AG04449 (cell line): ENCODE measurements at regions of chr17 and their contacts with region 1.

Region 1: DNA sequence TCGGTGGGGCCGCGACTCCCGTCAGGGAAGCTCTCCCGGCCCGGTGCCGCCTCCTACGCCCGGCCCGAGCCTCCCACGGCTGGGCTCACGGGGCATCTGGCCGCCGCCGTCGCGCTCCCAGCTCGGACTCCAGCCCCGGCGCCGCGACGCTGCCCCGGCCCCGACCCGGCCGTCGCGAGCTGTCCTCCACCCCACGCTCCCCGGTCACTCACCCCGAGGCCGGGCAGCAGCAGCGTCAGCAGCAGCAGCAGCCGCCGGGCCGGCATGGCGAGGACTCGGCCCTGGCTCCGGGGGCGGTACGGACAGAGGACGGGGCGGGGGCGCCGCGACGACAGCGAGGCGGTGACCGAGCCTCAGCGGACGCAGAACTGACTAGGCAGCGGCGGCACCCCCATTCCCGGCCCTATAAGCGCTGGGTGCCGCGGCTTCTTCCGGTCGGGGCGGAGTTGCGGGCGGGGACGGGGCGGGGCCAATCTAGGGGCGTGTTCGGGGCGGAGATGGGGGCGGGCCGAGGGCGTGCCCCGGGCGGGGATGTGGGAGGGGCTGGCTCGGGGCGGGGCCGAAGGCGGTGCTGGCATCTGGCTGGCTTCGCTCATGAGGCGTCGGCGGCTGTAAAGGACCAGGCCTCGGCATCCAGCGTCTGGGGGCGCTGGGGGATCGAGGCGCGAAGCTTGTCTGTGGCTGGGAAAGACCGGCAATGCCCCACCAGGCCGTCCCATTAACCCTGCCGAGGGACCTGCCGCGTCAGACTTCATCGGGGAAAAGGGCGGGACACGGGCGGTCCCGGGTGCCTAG is at the start of gene ERN1:
- DNase-seq: peak; percentile 56
- H3K4me3 ChIP-seq: peak within 1 kb of the TSS; percentile 64
- CTCF ChIP-seq: no peak

Region 2: DNA sequence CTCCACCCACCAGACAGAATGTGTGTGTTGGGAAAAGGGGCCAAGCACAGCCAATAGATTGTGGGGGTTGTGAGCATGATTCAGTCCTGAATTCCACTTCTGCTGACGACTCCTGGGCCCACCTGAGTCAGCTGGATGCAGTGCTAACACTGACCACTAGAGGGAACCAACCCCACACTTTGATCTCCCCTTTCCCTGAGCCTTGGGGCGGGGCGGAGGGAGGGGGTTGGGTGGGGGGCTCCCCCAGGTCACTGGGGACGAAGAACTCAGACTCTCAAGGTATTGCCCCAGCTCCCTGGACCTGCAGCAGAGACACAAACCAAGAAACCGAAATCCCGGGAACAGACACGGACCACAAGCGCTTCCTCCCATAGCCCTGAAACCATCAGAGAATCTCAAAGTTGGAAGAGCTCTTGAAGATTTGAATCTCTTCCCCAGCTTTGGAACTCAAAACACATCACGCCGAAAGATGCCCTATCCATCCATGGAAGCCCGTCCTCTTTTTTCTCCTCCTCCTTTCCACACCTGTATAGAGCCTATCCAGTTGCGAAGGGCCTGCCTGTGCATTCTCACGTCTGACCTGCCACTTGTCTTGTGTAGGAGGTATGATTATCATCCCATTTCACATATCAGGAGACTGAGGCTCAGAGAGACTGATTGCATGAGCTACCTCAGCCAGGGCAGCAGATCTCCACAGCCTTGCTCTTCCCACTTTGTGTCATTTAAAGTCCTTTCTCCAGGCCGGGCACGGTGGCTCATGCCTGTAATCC is 218.1 kb before region 1 on chr17:
- CTCF ChIA-PET with region 1: interaction called, 111 read pairs
- POLR2A ChIA-PET with region 1: no interaction called
- DNase-seq: no peak
- H3K4me3 ChIP-seq: no peak overlapping the region
- CTCF ChIP-seq: peak; percentile 79

Region 3: DNA sequence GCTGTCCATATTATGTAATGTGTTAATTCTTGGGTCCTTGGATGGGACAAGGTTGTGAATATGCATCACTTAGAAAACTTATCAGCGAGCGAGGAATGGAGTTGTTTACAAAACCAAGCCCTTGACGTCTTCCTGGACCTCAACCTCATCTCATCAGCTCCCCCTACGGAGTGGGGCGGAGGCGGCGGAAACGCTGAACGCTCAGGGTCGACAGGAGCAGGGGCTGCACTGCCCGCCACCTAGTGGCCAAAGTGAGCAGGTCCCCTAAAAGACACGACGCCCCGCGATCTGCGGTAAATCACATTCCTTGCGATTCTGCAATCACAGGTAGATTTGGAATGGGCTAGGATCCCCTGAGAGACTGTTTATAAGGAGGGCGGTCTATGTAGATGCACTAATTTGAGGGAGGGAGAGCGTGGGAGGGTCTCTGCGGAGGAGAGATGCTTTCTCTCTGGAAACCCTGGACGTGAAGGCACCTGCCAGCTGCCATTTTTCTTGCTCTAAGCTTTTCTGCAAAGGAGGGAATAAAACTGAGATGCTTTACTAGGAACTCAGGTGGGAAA is 104.1 kb before region 1 on chr17:
- CTCF ChIA-PET with region 1: interaction called, 1,118 read pairs
- POLR2A ChIA-PET with region 1: interaction called, 11 read pairs
- DNase-seq: no peak
- H3K4me3 ChIP-seq: peak overlapping the region; percentile 20
- CTCF ChIP-seq: peak; percentile 90

Region 4: DNA sequence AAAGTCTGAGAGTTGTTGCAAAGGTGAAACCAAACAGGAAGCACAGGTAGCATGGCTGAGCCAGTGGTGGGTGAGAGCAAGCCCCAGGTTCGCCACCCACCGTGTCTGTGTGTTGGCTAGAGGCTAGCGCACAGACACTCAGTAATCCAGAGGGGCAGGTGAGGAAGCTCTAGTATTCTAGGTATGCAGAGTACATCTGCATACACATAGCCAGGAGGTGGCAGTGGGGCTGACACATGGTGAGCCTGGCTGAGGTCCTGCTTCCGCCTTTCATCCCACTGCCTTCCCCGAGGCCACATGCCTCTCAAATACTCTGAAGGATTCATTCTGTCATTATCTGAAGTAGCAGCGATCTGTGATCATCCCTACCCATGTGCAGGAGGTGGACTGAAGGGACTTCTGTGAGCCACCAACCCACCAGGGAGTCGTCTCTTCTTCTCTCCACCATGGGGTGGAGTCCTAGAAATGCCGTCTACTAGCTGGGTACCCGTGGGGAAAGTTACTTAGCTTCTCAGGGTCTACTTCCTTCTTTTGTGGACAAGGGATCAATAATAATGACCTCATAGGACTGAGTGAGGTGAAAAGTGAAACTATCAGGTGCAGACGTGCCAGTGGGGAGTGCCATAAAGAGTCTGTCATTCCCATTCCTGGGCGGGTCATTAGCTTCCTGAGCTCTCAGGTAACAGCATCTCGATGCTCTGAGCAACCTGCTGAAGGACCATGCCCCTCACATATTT is 73.5 kb before region 1 on chr17:
- CTCF ChIA-PET with region 1: interaction called, 83 read pairs
- POLR2A ChIA-PET with region 1: no interaction called
- DNase-seq: no peak
- H3K4me3 ChIP-seq: no peak overlapping the region
- CTCF ChIP-seq: no peak

Region 5: DNA sequence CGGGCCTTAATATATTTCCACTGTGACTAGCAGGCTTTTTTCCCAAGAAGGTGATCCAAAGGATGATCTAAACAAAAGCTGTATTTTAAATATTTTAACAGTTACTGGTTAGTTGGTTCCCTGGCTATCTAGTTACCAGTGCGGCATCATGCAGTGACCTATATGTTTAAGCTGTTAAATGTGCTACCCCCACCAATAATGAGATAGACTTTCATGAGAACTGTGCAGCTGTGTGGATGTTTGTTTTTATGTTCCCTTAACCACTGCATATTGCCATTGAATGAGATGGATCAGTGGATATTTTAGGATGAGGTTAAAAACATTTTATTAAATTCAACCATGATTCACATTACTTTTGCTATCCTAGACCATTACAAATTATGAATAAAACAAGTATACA is 17.0 kb before region 1 on chr17:
- CTCF ChIA-PET with region 1: interaction called, 37 read pairs
- POLR2A ChIA-PET with region 1: interaction called, 4 read pairs
- DNase-seq: no peak
- H3K4me3 ChIP-seq: no peak overlapping the region
- CTCF ChIP-seq: no peak

Region 6: DNA sequence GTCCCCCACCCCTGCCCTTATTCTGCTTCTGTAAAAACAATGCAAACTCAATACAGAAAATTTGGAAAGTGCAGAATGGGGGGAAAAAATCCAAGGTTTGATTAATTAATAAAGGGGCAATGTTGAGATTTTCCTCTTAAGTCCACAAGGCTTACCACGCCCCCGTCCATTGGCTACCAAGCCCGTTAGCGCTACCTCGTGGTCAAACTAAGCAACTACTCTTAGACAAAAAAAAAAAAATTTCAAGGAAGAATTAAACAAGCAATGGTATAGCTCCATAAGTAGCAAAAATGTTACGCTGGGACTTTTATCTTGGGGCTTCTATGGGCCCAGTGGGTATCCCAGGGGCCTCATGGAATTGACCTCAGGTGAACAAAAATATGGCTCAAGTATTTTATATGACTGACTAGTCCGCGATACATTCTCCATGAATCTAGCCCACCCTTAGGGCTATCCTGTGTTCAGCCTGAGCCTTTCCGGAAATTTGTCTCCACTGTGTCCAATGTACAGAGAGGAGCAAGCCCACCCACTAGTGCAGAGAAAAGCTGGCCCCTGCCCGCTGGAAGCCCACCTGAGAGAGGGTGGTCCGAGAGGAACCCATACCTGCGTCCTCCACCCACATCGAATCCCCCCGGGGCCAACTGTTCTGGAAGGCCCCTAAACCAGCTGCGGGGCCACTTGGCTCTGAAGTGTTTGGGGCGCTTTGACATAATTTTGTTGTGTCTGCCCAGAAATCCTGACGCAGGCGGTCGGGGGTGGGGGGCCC is 152.2 kb after region 1 on chr17:
- CTCF ChIA-PET with region 1: interaction called, 60 read pairs
- POLR2A ChIA-PET with region 1: interaction called, 3 read pairs
- DNase-seq: no peak
- H3K4me3 ChIP-seq: no peak overlapping the region
- CTCF ChIP-seq: peak; percentile 62